AG04449 (cell line): ENCODE measurements at regions of chr1 and their contacts with region 1.

Region 1: DNA sequence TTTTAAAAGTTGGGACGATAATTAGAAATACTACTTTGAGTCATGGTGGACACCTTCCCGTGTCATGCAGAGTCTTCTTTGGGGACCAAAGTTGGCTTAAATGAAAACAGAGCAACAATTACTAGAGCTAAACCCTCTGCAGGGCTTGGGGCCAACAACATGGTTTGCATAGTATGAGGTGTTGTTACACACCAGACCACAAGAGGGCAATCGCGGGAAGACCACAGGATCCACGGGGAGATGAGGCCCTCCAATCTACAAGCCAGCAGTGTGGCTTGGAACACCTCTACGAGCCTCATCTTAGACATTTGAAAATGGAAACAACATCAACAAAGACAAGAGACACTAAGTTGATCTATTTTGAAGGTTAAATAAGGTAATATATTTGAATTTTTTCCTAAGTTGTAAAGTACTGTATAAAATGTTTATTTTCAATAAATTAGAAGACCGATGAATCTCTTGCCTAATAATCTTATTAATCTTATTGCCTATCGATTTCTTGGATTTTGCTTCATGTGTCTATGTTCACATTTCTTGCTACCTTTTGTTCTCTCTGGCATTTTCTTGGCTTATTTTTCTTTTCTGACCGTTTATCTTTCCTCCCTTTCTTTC is 8.2 kb upstream of the SMCP start:
- DNase-seq: no peak
- H3K4me3 ChIP-seq: no peak overlapping the region
- CTCF ChIP-seq: peak; percentile 91

Region 2: GRCh38 chr1:152654110-152654509 is 215.8 kb before region 1 on chr1:
- CTCF ChIA-PET with region 1: interaction called, 17 read pairs
- POLR2A ChIA-PET with region 1: no interaction called
- DNase-seq: no peak
- H3K4me3 ChIP-seq: no peak overlapping the region
- CTCF ChIP-seq: peak; percentile 59

Region 3: GRCh38 chr1:152707860-152708259 is 162.1 kb before region 1 on chr1 and contains the start of gene LCE4A:
- CTCF ChIA-PET with region 1: no interaction called
- POLR2A ChIA-PET with region 1: no interaction called
- DNase-seq: no peak
- H3K4me3 ChIP-seq: no peak within 1 kb of the TSS
- CTCF ChIP-seq: no peak

Region 4: DNA sequence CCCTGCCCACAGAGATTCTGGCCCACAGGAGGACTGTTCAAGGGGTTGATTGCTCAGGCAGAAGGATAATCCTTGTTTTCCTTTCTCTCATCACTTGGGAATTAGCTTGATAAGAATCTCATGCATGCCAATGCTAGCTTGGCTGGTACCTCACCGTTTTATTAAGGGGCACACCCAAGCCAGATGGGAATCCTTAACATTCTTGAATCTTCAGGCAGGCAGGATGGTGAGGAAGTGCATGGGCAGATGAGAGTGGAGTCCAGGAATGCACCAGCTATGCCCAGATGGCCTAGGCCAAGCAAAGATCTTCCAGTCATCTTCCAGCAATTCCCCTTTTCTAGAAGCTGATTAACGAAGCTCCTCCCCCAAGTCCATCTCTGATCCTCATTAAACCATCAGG is 14.3 kb before region 1 on chr1:
- CTCF ChIA-PET with region 1: interaction called, 71 read pairs
- POLR2A ChIA-PET with region 1: no interaction called
- DNase-seq: no peak
- H3K4me3 ChIP-seq: no peak overlapping the region
- CTCF ChIP-seq: no peak

Region 5: DNA sequence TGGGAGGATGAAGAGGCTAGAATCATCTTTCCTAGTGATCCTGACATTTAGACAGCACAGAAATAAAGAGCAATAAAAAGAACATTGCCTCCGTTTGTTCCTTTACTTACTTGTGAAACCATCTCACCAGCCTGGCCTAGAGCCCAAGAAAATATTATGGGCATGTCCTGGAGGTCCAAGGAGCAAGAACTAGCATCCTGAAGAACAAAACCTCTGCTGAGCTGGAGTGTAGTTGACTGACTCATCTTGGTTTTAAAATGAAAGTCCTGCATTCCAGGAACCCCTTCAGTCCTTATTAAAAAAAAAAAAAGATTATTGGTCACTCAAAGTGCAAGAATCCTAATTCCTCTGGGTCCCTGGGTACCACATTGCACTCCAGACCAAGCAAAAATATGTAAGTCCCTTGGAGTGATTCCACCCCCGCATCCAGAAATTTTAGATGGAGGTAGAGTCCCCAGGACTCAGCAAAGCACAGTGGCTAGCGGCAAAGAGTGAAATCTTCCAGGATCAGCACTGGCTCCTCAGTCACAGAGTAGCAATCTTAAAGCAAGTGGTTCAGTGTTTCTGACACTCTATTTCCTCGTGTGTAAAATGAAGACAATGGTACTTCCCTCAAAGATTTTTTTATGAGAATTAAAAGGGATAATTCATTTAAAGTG is 15.2 kb after region 1 on chr1:
- CTCF ChIA-PET with region 1: interaction called, 42 read pairs
- POLR2A ChIA-PET with region 1: no interaction called
- DNase-seq: peak; percentile 60
- H3K4me3 ChIP-seq: no peak overlapping the region
- CTCF ChIP-seq: no peak

Region 6: GRCh38 chr1:152917794-152918193 is 47.9 kb after region 1 on chr1:
- CTCF ChIA-PET with region 1: interaction called, 375 read pairs
- POLR2A ChIA-PET with region 1: no interaction called
- DNase-seq: no peak
- H3K4me3 ChIP-seq: no peak overlapping the region
- CTCF ChIP-seq: no peak

Region 7: DNA sequence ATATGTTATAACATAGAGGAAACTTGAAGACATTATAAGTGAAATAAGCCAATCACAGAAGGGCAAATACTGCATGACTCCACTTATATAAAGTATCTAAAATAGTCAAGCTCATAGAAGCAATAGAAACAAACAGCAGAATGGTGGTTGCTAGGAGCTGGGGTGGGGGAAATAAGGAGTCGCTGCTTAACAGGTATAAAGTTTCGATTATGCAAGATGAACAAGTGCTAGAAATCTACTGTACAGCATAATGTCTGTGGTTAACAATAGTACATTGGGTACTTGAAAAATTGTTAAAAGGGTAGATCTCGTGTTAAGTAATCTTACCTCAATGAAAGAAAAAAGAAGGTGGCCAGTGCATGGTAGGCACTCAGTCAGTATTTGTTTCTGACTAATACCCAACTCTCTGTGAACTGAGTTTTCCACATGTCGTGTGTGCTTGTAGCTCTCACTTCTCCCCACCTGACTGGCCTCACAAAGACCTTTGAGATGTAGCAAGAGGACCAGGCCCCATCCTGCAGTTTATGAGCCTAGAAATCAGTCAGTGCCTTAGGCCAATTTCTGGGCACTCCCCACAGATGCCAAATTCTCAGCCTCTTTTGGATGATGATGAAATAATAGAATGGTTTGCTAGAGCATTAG is 62.4 kb after region 1 on chr1:
- CTCF ChIA-PET with region 1: interaction called, 375 read pairs
- POLR2A ChIA-PET with region 1: no interaction called
- DNase-seq: no peak
- H3K4me3 ChIP-seq: no peak overlapping the region
- CTCF ChIP-seq: no peak

Region 8: DNA sequence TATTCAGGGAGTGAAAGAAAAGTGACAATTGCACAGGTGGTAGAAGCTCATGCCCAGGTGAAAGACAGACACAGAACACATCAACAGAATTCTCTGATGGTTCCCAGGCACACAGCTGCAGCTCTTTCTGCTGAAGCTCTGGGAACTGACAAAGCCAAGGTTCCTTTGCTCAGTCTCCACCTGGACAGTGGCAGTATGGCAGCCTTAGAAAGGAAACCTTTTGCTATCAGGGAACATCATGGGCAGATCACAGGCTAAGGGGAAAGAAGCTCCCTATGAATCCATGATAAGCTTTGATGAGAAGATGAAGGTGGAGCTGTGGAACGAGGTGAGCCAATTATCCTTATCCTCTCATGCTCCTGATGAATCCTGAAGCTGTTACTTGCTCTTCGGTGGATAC is 200.3 kb after region 1 on chr1:
- CTCF ChIA-PET with region 1: no interaction called
- POLR2A ChIA-PET with region 1: no interaction called
- DNase-seq: no peak
- H3K4me3 ChIP-seq: no peak overlapping the region
- CTCF ChIP-seq: no peak

Region 9: GRCh38 chr1:153210206-153210605 is 340.3 kb after region 1 on chr1:
- CTCF ChIA-PET with region 1: no interaction called
- POLR2A ChIA-PET with region 1: no interaction called
- DNase-seq: no peak
- H3K4me3 ChIP-seq: no peak overlapping the region
- CTCF ChIP-seq: no peak

Region 10: GRCh38 chr1:153220606-153221303 is 350.8 kb after region 1 on chr1:
- CTCF ChIA-PET with region 1: interaction called, 37 read pairs
- POLR2A ChIA-PET with region 1: no interaction called
- DNase-seq: no peak
- H3K4me3 ChIP-seq: no peak overlapping the region
- CTCF ChIP-seq: no peak